CD4-positive, alpha-beta T cell (primary cell): ENCODE measurements at regions of chr3 and their contacts with region 1.

Region 1: GRCh38 chr3:126475413-126476114 is at the start of gene ZXDC:
- DNase-seq: peak; percentile 80 to 97 (median 94)
- ATAC-seq: peak; percentile 75
- H3K4me3 ChIP-seq: peak within 1 kb of the TSS; percentile 74
- H3K4me3 Mint-ChIP-seq: peak within 1 kb of the TSS; percentile 95
- H3K27ac ChIP-seq: peak within 1 kb of the TSS; percentile 23 to 77
- H3K27ac Mint-ChIP-seq: peak within 1 kb of the TSS; percentile 94
- H3K4me1 ChIP-seq: peaks cover 41% of the 10 kb centered on the region
- H3K4me1 Mint-ChIP-seq: peaks cover 51% of the 10 kb centered on the region
- H3K27me3 ChIP-seq: no peaks in the 10 kb centered on the region
- H3K27me3 Mint-ChIP-seq: no peaks in the 10 kb centered on the region
- CTCF ChIP-seq: no peak
- total RNA-seq, gene ZXDC: 60.7 to 61.3 TPM

Region 2: DNA sequence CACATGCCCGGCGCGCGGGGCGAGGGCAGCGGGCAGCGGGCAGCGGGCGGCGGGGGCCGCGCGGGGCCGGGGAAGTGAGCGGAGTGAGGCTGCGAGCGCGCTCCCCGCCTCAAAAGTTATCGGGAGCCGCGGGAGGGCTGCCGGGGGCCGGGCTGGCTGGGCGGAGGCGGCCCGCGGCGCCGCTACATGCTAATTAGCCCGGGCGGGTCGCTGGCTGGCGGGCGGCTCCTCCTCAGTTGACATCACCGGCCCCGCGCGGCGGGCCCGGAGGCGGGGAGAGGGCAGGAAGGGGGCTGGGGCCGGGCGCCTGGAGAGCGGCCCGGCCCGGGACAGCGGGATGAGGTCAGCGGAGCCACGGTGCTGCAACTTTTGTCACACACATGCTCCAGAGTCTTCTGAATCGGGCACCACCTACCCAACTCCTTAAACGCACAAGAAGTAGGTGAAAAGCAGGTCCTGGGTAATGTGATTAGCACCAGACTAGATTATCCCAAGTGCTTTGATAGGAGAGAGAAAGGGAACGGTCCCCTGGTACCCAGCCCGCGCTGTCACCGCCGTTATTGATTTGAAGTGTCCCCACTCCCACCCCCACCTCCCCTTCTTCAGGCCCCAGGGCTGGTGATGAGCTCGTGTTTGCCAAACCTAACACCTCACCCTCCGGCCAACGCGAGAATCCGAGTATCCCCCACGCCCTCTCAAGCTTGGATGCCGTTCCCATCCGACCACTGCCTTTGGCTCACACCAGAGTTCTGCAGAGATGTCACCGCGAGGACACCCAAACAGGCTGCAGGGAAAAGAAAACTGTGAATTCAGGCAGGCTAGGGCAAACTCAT is 1419.4 kb before region 1 on chr3 and contains the start of gene HEG1:
- CTCF ChIA-PET with region 1: no interaction called
- POLR2A ChIA-PET with region 1: no interaction called
- intact Hi-C with region 1: loop called in 1 of 2 experiments (anchors 10 kb)
- DNase-seq: peak; percentile 48 to 88 (median 73)
- ATAC-seq: peak; percentile 55
- H3K4me3 ChIP-seq: peak within 1 kb of the TSS; percentile 74
- H3K4me3 Mint-ChIP-seq: peak within 1 kb of the TSS; percentile 96
- H3K27ac ChIP-seq: peak within 1 kb of the TSS; percentile 74 to 86
- H3K27ac Mint-ChIP-seq: peak within 1 kb of the TSS; percentile 90
- H3K4me1 ChIP-seq: peaks cover 40% of the 10 kb centered on the region
- H3K4me1 Mint-ChIP-seq: peaks cover 45% of the 10 kb centered on the region
- H3K27me3 ChIP-seq: no peaks in the 10 kb centered on the region
- H3K27me3 Mint-ChIP-seq: peaks cover 5% of the 10 kb centered on the region
- CTCF ChIP-seq: no peak
- total RNA-seq, gene HEG1: 31.2 to 32.6 TPM

Region 3: DNA sequence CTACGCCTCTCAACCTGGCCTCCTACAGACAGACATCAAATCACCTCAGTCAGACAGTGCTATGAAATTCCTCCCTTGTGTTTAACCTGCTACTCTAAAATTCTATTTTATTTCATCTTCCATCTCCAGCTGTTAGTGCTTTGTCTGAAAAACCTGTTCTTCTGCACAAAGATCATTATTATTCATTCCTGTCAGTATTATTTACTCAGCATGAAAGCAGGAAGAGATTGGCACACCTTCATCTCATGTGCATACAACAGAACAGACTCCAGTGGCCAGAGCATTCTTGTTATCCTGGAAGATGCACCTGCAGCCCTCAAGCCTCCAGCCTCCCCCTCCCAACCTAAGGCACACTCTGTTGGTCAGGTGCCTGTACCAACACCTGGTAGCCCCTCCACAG is 508.4 kb before region 1 on chr3:
- CTCF ChIA-PET with region 1: no interaction called
- POLR2A ChIA-PET with region 1: no interaction called
- intact Hi-C with region 1: loop called in 1 of 2 experiments (anchors 5 kb)
- DNase-seq: no peak
- ATAC-seq: no peak
- H3K4me3 ChIP-seq: no peak overlapping the region
- H3K4me3 Mint-ChIP-seq: no peak overlapping the region
- H3K27ac ChIP-seq: no peak overlapping the region
- H3K27ac Mint-ChIP-seq: no peak overlapping the region
- H3K4me1 ChIP-seq: peaks cover 5% of the 10 kb centered on the region
- H3K4me1 Mint-ChIP-seq: peaks cover 3% of the 10 kb centered on the region
- H3K27me3 ChIP-seq: peaks cover 25 to 33% of the 10 kb centered on the region in 2 experiments
- H3K27me3 Mint-ChIP-seq: peaks cover 25% of the 10 kb centered on the region
- CTCF ChIP-seq: no peak

Region 4: GRCh38 chr3:126357295-126358037 is 118.1 kb before region 1 on chr3 and contains the start of gene KLF15:
- CTCF ChIA-PET with region 1: no interaction called
- POLR2A ChIA-PET with region 1: interaction called, 7 read pairs
- intact Hi-C with region 1: loop called in 1 of 2 experiments (anchors 5 kb)
- DNase-seq: peak; percentile 42 to 88 (median 65)
- ATAC-seq: peak; percentile 91
- H3K4me3 ChIP-seq: peak within 1 kb of the TSS; percentile 65
- H3K4me3 Mint-ChIP-seq: peak within 1 kb of the TSS; percentile 93
- H3K27ac ChIP-seq: no peak within 1 kb of the TSS
- H3K27ac Mint-ChIP-seq: no peak within 1 kb of the TSS
- H3K4me1 ChIP-seq: peaks cover 24% of the 10 kb centered on the region
- H3K4me1 Mint-ChIP-seq: peaks cover 17% of the 10 kb centered on the region
- H3K27me3 ChIP-seq: peaks cover 45 to 49% of the 10 kb centered on the region in 2 experiments
- H3K27me3 Mint-ChIP-seq: peaks cover 58% of the 10 kb centered on the region
- CTCF ChIP-seq: no peak
- total RNA-seq, gene KLF15: 0.30 TPM in 1 of 2 experiments, not detected in the other

Region 5: GRCh38 chr3:126634803-126635202 is 159.2 kb after region 1 on chr3:
- CTCF ChIA-PET with region 1: no interaction called
- POLR2A ChIA-PET with region 1: no interaction called
- intact Hi-C with region 1: no loop called
- DNase-seq: no peak
- ATAC-seq: no peak
- H3K4me3 ChIP-seq: no peak overlapping the region
- H3K4me3 Mint-ChIP-seq: no peak overlapping the region
- H3K27ac ChIP-seq: no peak overlapping the region
- H3K27ac Mint-ChIP-seq: no peak overlapping the region
- H3K4me1 ChIP-seq: no peaks in the 10 kb centered on the region
- H3K4me1 Mint-ChIP-seq: no peaks in the 10 kb centered on the region
- H3K27me3 ChIP-seq: no peaks in the 10 kb centered on the region
- H3K27me3 Mint-ChIP-seq: no peaks in the 10 kb centered on the region
- CTCF ChIP-seq: no peak

Region 6: GRCh38 chr3:127590593-127591477 is 1115.3 kb after region 1 on chr3 and contains the start of gene TPRA1:
- CTCF ChIA-PET with region 1: no interaction called
- POLR2A ChIA-PET with region 1: no interaction called
- intact Hi-C with region 1: loop called in 1 of 2 experiments (anchors 5 kb)
- DNase-seq: peak; percentile 51 to 93 (median 74)
- ATAC-seq: peak; percentile 89
- H3K4me3 ChIP-seq: peak within 1 kb of the TSS; percentile 71
- H3K4me3 Mint-ChIP-seq: peak within 1 kb of the TSS; percentile 99
- H3K27ac ChIP-seq: peak within 1 kb of the TSS; percentile 54 to 82
- H3K27ac Mint-ChIP-seq: peak within 1 kb of the TSS; percentile 93
- H3K4me1 ChIP-seq: peaks cover 36% of the 10 kb centered on the region
- H3K4me1 Mint-ChIP-seq: peaks cover 43% of the 10 kb centered on the region
- H3K27me3 ChIP-seq: no peaks in the 10 kb centered on the region
- H3K27me3 Mint-ChIP-seq: no peaks in the 10 kb centered on the region
- CTCF ChIP-seq: no peak
- total RNA-seq, gene TPRA1: 7.5 to 7.8 TPM